Activated CD8-positive, alpha-beta T cell treated with anti-CD3 and anti-CD28 coated beads for 36 hours (primary cell): ENCODE measurements at regions of chrX and their contacts with region 1.

Region 1: GRCh38 chrX:120250522-120251271 is at the start of gene ZBTB33:
- DNase-seq: peak; percentile 88
- ATAC-seq: peak; percentile 98
- H3K4me3 Mint-ChIP-seq: peak within 1 kb of the TSS; percentile 93
- H3K27ac Mint-ChIP-seq: peak within 1 kb of the TSS; percentile 96
- H3K4me1 Mint-ChIP-seq: peaks cover 27% of the 10 kb centered on the region
- H3K27me3 Mint-ChIP-seq: no peaks in the 10 kb centered on the region
- CTCF ChIP-seq: no peak
- total RNA-seq, gene ZBTB33: 11.6 to 12.4 TPM

Region 2: GRCh38 chrX:120308959-120309872 is 58.5 kb after region 1 on chrX:
- CTCF ChIA-PET with region 1: interaction called, 6 read pairs
- POLR2A ChIA-PET with region 1: interaction called, 3 read pairs
- intact Hi-C with region 1: loop called (anchors 10 kb)
- DNase-seq: peak; percentile 75
- ATAC-seq: peak; percentile 96
- H3K4me3 Mint-ChIP-seq: peak overlapping the region; percentile 70
- H3K27ac Mint-ChIP-seq: no peak overlapping the region
- H3K4me1 Mint-ChIP-seq: peaks cover 16% of the 10 kb centered on the region
- H3K27me3 Mint-ChIP-seq: peaks cover 48% of the 10 kb centered on the region
- CTCF ChIP-seq: peak; percentile 21